ENCODE measurements at regions of chr12 and their contacts with region 1.

Region 1: DNA sequence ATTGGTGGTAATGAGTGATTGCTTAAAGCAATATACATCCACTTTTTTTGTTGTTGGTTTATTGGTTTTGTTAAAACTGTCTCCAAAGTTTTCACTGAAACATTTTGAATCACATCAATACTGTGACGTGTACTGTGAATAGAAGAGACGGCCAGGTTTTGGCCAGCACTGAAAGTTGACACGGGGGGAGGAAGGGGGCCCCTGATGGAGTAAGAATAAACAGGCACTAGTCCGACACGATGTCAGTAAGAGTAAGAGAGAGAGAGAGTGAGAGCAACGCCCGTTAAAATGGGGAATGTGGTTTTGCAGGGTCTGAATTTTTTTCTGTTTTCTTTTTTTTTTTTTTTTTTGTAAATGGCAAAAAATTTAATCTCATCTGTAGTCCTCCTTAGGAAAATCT is 14.7 kb downstream of the PEBP1 start:
- DNase-seq: no peak

Region 2: DNA sequence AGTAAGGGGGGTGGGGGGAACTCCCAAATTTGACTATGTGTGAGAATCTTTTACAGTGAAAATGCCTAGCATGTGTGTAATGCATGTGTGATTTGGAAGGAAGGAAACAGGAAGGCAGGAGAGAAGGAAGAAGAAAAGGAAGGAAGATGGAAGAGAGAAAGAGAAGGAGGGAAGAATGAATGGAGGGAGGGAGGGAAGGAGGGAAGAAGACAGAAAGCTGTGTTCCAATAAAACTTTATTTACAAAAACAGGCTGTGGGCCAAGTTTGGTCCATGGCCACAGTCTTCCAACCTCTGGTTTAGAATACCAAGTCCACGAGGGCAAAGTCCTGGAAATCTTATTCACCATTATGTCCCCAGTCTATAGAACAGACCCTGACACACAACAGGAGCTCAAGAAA is 460.8 kb before region 1 on chr12:
- intact Hi-C with region 1: loop called in 1 of 2 experiments (anchors 5 kb)
- DNase-seq: no peak

Region 3: GRCh38 chr12:118103604-118104382 is 46.8 kb before region 1 on chr12 and contains the start of gene VSIG10:
- intact Hi-C with region 1: no loop called
- DNase-seq: peak; percentile 83
- total RNA-seq, gene VSIG10: 11.1 to 15.3 TPM